Transverse colon (tissue), 4 donors: ENCODE measurements at regions of chr15 and their contacts with region 1.

Region 1: DNA sequence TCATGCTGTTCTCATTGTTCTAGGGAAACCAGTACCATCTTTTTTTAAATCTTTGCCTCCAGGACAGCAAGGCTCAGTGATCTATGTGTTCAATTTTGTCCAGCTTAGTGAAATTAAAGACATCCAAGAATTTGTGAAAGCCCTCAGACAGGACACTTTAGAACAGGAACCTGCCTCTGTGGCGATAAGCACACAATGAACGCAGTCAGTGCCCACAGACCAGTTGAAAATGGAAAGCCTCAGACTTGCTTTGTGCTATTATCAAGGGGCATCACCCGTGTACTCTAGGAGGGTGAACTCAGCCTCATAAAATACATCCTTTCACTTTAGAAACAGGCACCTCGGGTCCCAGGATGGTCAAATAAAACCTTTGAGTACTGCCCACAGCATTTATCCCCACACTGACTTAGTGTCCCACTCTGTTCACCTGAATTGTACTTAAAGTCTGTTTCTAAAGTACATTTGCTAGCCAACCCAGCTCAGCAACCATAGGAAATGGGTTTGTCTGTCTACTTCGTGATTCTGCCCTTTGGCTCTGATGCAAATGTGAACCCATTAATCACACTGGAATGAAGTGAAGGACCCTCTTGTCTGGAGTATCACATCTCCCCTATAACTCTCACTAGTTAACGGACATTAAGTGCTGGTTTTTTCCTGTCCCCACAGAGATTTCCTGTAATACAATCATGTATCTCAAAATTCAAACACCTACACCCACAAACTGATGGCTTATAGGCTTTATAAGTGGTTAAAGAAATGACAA is 20.3 kb downstream of the EID1 start:
- DNase-seq: no peak
- H3K4me3 ChIP-seq: no peak overlapping the region
- H3K27ac ChIP-seq: peak overlapping the region in 1 of 4 donors; percentile 60
- H3K4me1 ChIP-seq: no peaks in the 10 kb centered on the region
- H3K27me3 ChIP-seq: no peaks in the 10 kb centered on the region
- CTCF ChIP-seq: no peak
- EP300 ChIP-seq: no peak
- POLR2A ChIP-seq: no peak

Region 2: DNA sequence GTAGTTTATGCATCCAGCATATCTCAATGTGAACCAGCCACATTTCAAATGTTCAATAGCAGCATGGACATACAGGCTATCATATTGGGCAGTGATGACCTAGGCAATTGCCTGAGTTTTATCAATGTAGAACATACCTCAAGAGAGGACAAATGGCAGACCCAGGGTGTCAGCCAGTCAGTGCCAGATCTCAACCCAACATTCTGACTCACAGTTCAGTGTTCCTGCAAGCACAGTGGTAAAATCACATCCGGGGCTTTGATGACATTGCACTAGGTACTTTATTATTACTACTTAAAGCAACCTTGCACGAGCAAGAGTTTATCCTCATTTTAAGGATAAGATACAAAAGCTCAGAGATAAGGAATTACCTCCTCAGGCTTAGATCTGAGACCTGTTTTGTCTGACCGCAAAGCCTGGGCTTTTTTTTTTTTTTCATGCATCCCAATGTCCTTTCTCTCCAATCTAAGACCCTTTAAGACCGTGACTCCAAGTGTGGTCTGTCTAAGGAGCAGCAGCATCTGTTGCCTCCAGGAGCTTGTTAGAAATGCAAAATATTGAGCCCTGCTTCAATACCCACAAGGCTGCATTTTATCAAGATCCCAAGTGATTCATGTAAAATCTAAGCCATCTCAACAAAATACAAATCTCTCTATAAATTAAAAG is 632.1 kb before region 1 on chr15:
- in situ Hi-C with region 1: no loop called
- intact Hi-C with region 1: loop called (anchors 5 kb)
- DNase-seq: no peak
- H3K4me3 ChIP-seq: no peak overlapping the region
- H3K27ac ChIP-seq: no peak overlapping the region
- H3K4me1 ChIP-seq: no peaks in the 10 kb centered on the region
- H3K27me3 ChIP-seq: no peaks in the 10 kb centered on the region
- CTCF ChIP-seq: no peak
- EP300 ChIP-seq: no peak
- POLR2A ChIP-seq: no peak

Region 3: DNA sequence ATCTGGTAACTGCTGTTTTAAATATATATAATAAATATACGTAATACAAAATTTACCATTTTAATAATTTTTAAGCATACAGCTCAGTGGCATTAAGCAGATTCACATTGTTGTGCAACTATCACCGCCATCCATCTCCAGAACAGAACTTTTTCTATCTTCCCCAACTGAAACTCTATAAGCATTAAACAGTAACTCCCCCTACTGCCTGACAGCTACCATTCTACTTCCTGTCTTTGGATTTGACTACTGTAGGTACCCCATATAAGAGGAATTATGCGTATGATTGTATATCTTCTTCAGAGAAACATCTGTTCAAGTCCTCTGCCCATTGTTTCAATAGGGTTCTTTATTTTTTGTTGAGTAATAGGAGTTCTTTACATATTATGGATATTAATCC is 16.5 kb after region 1 on chr15:
- in situ Hi-C with region 1: no loop called
- intact Hi-C with region 1: loop called (anchors 1 kb)
- DNase-seq: no peak
- H3K4me3 ChIP-seq: no peak overlapping the region
- H3K27ac ChIP-seq: no peak overlapping the region
- H3K4me1 ChIP-seq: no peaks in the 10 kb centered on the region
- H3K27me3 ChIP-seq: no peaks in the 10 kb centered on the region
- CTCF ChIP-seq: no peak
- EP300 ChIP-seq: no peak
- POLR2A ChIP-seq: no peak

Region 4: DNA sequence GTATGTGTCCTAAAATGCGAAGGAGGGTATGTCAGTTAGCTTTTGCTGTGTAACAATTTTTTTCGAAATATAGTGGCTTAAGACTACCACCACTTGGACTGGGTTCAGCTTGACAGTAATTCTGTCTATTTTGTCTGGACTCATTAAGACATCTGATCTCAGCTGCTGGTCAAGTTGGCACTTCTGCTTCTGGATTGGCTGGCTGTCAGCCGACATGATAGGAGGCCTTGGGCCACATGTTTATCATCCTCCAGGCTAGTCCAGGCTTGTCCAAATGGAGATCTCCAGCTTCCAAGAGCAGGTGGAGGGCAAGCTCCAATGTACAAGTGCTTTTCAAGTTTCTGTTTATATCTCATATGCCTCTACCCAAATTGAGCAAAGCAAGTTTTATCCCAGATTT is 367.6 kb after region 1 on chr15:
- in situ Hi-C with region 1: no loop called
- intact Hi-C with region 1: no loop called
- DNase-seq: no peak
- H3K4me3 ChIP-seq: no peak overlapping the region
- H3K27ac ChIP-seq: no peak overlapping the region
- H3K4me1 ChIP-seq: no peaks in the 10 kb centered on the region
- H3K27me3 ChIP-seq: no peaks in the 10 kb centered on the region
- CTCF ChIP-seq: no peak
- EP300 ChIP-seq: no peak
- POLR2A ChIP-seq: no peak